Caco-2 (cell line): ENCODE measurements at regions of chr11 and their contacts with region 1.

Region 1: DNA sequence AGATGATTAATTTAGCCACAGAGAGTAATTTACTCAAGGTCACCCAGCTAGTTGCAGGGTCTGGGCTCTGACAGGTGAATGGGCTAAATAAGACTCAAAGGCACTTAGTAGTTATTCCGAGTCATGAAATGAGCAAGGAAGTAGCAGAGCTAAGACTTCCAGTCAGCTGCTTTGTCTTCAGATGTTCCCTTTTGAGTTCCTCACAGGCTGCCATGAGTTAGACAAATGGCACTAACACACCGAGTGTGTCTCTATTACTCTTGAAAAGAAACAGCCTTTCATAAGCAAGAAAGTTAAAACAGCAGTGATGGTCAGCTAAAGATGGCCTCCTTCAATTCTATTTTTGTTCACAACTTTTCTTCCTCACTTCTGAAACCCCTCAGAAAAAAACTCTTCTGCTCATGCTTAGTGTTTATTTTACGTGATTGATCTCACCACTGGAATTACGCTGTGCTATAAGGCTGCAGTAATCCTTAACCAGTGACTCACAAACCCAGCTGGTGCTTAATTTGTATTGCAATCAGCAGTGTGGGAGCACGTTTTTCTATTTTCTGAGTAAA is 389.1 kb downstream of the AASDHPPT start:
- DNase-seq: peak; percentile 76 to 85
- H3K4me3 ChIP-seq: no peak overlapping the region
- H3K4me3 Mint-ChIP-seq: peak overlapping the region; percentile 67
- H3K27ac Mint-ChIP-seq: peak overlapping the region; percentile 88
- H3K4me1 ChIP-seq: peaks cover 92% of the 10 kb centered on the region
- H3K4me1 Mint-ChIP-seq: peaks cover 77% of the 10 kb centered on the region
- H3K27me3 ChIP-seq: no peaks in the 10 kb centered on the region
- H3K27me3 Mint-ChIP-seq: no peaks in the 10 kb centered on the region
- CTCF ChIP-seq: no peak

Region 2: GRCh38 chr11:106156290-106156937 is 310.2 kb before region 1 on chr11:
- CTCF ChIA-PET with region 1: no interaction called
- POLR2A ChIA-PET with region 1: no interaction called
- intact Hi-C with region 1: loop called (anchors 1 kb)
- DNase-seq: peak; percentile 64 to 71
- H3K4me3 ChIP-seq: no peak overlapping the region
- H3K4me3 Mint-ChIP-seq: no peak overlapping the region
- H3K27ac Mint-ChIP-seq: peak overlapping the region; percentile 52
- H3K4me1 ChIP-seq: peaks cover 5% of the 10 kb centered on the region
- H3K4me1 Mint-ChIP-seq: peaks cover 16% of the 10 kb centered on the region
- H3K27me3 ChIP-seq: no peaks in the 10 kb centered on the region
- H3K27me3 Mint-ChIP-seq: no peaks in the 10 kb centered on the region
- CTCF ChIP-seq: peak; percentile 69 to 71

Region 3: DNA sequence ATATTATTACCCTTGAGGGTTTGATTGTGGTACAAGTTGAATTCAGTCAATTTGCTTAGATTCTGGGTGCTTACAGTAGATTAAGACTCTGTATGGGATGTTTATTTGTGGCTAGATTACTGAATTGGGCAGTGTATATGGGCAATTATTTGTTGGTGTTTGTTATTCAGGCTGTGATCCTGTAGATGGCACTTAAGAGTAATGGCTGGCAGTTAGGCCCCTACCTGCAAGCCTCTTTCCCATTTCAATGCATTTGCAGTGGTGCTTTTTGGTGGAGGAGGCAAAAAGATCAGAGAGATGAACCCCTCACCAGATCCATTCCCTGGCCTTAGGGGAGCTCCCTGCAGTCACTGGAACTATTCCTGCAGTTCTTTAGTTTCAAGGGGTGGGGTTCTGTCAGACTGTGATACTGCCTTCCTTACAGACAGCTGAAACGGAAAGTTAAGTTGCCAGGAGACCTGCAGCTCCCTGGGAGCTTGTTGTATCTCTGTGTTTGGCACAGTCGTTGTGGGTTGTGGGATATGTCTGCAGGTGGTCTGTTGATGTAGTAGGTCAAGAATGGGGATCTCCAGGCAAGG is 189.7 kb before region 1 on chr11:
- CTCF ChIA-PET with region 1: no interaction called
- POLR2A ChIA-PET with region 1: no interaction called
- intact Hi-C with region 1: loop called (anchors 1 kb)
- DNase-seq: peak; percentile 48 to 49
- H3K4me3 ChIP-seq: no peak overlapping the region
- H3K4me3 Mint-ChIP-seq: no peak overlapping the region
- H3K27ac Mint-ChIP-seq: peak overlapping the region; percentile 46
- H3K4me1 ChIP-seq: peaks cover 14% of the 10 kb centered on the region; the same call in 1 of the 2 replicates
- H3K4me1 Mint-ChIP-seq: peaks cover 20% of the 10 kb centered on the region
- H3K27me3 ChIP-seq: no peaks in the 10 kb centered on the region
- H3K27me3 Mint-ChIP-seq: no peaks in the 10 kb centered on the region
- CTCF ChIP-seq: peak; percentile 46 to 63

Region 4: DNA sequence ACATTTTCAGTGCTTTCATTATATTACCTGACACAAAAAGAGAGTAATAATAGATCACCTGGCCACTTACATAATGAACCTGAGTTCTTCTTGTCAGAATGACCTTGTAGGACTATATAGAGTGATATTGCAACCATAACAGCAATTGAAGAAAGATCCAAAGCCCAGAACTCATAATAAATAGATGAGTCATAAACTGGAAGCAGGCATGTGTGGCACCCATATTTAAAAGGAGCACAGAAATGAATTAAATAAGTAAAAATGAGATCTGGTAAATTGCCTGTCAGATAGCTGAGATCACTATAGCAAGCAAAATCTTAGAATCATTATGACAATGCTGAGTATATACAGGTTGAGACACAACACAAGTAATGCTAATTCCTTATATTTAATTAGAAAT is 57.4 kb before region 1 on chr11:
- CTCF ChIA-PET with region 1: no interaction called
- POLR2A ChIA-PET with region 1: no interaction called
- intact Hi-C with region 1: loop called (anchors 2 kb)
- DNase-seq: no peak
- H3K4me3 ChIP-seq: no peak overlapping the region
- H3K4me3 Mint-ChIP-seq: no peak overlapping the region
- H3K27ac Mint-ChIP-seq: no peak overlapping the region
- H3K4me1 ChIP-seq: no peaks in the 10 kb centered on the region; the same call in 1 of the 2 replicates
- H3K4me1 Mint-ChIP-seq: no peaks in the 10 kb centered on the region
- H3K27me3 ChIP-seq: no peaks in the 10 kb centered on the region
- H3K27me3 Mint-ChIP-seq: no peaks in the 10 kb centered on the region
- CTCF ChIP-seq: no peak

Region 5: DNA sequence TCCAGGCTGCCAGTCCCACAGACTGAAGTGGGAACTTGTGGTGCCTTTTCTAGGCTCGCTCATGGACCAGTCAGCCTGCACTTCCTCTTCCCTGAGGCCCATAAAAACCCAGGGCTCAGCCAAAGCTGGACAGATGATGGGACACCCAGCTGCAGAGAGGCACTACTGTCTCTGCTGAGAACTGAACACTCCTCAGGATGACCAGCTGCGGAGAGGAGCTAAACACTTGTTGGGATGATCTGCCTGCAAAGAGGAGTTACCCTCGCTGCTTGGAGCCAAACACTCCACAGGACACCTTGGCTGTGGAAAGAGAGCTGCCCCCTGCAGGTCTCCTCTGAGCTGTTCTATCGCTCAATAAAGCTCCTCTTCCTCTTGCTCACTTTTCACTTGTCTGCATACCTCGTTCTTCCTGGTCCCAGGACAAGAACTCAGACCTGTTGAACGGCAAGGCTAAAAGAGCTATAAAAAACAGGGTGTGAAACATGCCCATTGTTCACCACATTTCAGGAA is 86.1 kb after region 1 on chr11:
- CTCF ChIA-PET with region 1: interaction called, 3 read pairs
- POLR2A ChIA-PET with region 1: interaction called, 4 read pairs
- intact Hi-C with region 1: loop called (anchors 1 kb)
- DNase-seq: no peak
- H3K4me3 ChIP-seq: no peak overlapping the region
- H3K4me3 Mint-ChIP-seq: no peak overlapping the region
- H3K27ac Mint-ChIP-seq: peak overlapping the region; percentile 75
- H3K4me1 ChIP-seq: peaks cover 38% of the 10 kb centered on the region
- H3K4me1 Mint-ChIP-seq: peaks cover 29% of the 10 kb centered on the region
- H3K27me3 ChIP-seq: no peaks in the 10 kb centered on the region
- H3K27me3 Mint-ChIP-seq: no peaks in the 10 kb centered on the region
- CTCF ChIP-seq: no peak

Region 6: GRCh38 chr11:106608677-106609076 is 142.1 kb after region 1 on chr11:
- CTCF ChIA-PET with region 1: no interaction called
- POLR2A ChIA-PET with region 1: no interaction called
- intact Hi-C with region 1: no loop called
- DNase-seq: no peak
- H3K4me3 ChIP-seq: no peak overlapping the region
- H3K4me3 Mint-ChIP-seq: no peak overlapping the region
- H3K27ac Mint-ChIP-seq: no peak overlapping the region
- H3K4me1 ChIP-seq: 0 out of 2 replicates have a peak, but pooled peaks cover 3% of the 10 kb centered on the region
- H3K4me1 Mint-ChIP-seq: no peaks in the 10 kb centered on the region
- H3K27me3 ChIP-seq: no peaks in the 10 kb centered on the region
- H3K27me3 Mint-ChIP-seq: no peaks in the 10 kb centered on the region
- CTCF ChIP-seq: no peak